Activated T-helper 2 cell treated with anti-CD3 and anti-CD28 coated beads, Interferon-gamma antibody, Interleukin-2, Interleukin-4, amounts not matched to agents 10 μg/mL and 5 μg/mL and 100 μg/mL, durations not matched to agents 14 hours and 24 hours and 36 hours (primary cell): ENCODE measurements at regions of chr10 and their contacts with region 1.

Region 1: GRCh38 chr10:110504111-110504735 is 6.5 kb downstream of the DUSP5 start:
- DNase-seq: peak; percentile 70
- H3K4me3 Mint-ChIP-seq: peak overlapping the region; percentile 96
- H3K27ac Mint-ChIP-seq: peak overlapping the region; percentile 81
- H3K4me1 Mint-ChIP-seq: peaks cover 86% of the 10 kb centered on the region
- H3K27me3 Mint-ChIP-seq: no peaks in the 10 kb centered on the region

Region 2: GRCh38 chr10:110311357-110311949 is 192.8 kb before region 1 on chr10:
- intact Hi-C with region 1: loop called (anchors 2 kb)
- DNase-seq: no peak
- H3K4me3 Mint-ChIP-seq: no peak overlapping the region
- H3K27ac Mint-ChIP-seq: no peak overlapping the region
- H3K4me1 Mint-ChIP-seq: peaks cover 33% of the 10 kb centered on the region
- H3K27me3 Mint-ChIP-seq: no peaks in the 10 kb centered on the region

Region 3: GRCh38 chr10:110528224-110528997 is 24.2 kb after region 1 on chr10:
- intact Hi-C with region 1: loop called (anchors 1 kb)
- DNase-seq: no peak
- H3K4me3 Mint-ChIP-seq: peak overlapping the region; percentile 1
- H3K27ac Mint-ChIP-seq: peak overlapping the region; percentile 73
- H3K4me1 Mint-ChIP-seq: peaks cover 66% of the 10 kb centered on the region
- H3K27me3 Mint-ChIP-seq: no peaks in the 10 kb centered on the region

Region 4: GRCh38 chr10:110535958-110536891 is 32.0 kb after region 1 on chr10:
- intact Hi-C with region 1: loop called (anchors 1 kb)
- DNase-seq: peak; percentile 42
- H3K4me3 Mint-ChIP-seq: peak overlapping the region; percentile 27
- H3K27ac Mint-ChIP-seq: peak overlapping the region; percentile 92
- H3K4me1 Mint-ChIP-seq: peaks cover 55% of the 10 kb centered on the region
- H3K27me3 Mint-ChIP-seq: no peaks in the 10 kb centered on the region

Region 5: DNA sequence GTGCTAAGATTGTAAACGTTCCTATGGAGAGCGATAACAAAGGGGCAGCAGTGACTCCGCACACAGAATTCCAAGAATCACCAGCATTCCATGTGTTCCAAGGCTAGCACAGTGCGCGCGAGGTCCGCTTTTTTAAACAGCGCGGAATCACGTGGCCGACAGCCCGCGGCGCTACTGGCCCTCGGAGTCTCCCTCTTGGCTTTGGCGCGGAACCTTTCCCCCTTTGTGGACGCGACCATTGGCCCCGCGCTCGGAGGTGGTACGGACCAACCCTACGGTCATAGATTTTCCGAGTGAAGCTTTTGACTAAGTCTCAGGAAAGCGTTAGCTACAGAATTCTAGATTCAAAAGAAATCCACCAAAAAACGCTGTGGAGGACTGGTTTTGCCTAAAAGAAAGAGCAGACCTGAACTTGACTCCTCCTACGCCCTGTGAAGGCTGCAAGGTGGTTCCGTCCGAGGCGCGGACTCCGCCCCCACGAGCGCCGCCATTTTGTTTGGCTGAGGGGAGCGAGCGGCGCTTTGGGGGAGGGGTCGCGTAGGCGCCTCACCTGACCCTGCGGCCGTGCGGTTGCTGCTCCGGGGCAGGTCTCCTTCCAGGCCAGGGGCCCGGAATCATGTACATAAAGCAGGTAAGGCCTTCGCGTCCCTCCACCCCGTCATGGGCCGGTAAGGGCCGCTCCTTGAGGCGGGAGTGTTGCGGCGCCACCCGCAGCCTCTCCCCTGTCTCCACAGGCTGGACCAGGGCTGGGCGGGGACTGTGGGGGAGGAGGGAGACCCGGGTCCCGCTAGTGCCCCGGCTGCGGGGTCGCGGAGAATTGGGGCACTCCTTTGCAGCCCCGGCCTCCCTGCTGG is 63.2 kb after region 1 on chr10 and contains the start of gene SMC3:
- intact Hi-C with region 1: loop called (anchors 2 kb)
- DNase-seq: peak; percentile 90
- H3K4me3 Mint-ChIP-seq: peak within 1 kb of the TSS; percentile 90
- H3K27ac Mint-ChIP-seq: peak within 1 kb of the TSS; percentile 98
- H3K4me1 Mint-ChIP-seq: peaks cover 51% of the 10 kb centered on the region
- H3K27me3 Mint-ChIP-seq: peaks cover 9% of the 10 kb centered on the region
- total RNA-seq, gene SMC3: 78.4 and 78.8 TPM in 2 replicates